Activated CD8-positive, alpha-beta T cell treated with anti-CD3 and anti-CD28 coated beads, Interleukin-2, amount 10 ng/mL, durations not matched to agents 7 days and 5 days (primary cell): ENCODE measurements at regions of chr1 and their contacts with region 1.

Region 1: DNA sequence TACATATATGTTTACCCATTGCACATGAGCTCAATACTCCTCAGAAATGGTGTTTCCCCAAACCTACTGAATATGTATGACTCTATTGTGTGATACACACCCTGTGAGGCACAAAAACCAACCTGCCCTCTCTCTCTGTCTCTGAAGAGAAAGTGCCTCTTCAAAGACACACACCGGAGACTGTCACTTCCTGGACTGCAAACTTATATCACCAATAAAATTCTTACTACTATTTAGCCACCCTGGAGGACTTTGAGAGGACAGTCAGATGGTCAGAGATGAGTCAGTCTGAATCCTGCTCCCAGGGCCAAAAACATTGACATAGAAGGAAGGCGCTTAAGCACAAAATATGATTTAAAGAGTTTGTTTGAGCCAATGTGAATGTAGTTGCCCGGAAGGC is 110.4 kb downstream of the PPIAL4G start:
- DNase-seq: peak; percentile 73
- ATAC-seq: peak; percentile 66
- H3K4me3 Mint-ChIP-seq: peak overlapping the region; percentile 71
- H3K27ac Mint-ChIP-seq: peak overlapping the region; percentile 98
- H3K4me1 Mint-ChIP-seq: peaks cover 59% of the 10 kb centered on the region
- H3K27me3 Mint-ChIP-seq: no peaks in the 10 kb centered on the region

Region 2: DNA sequence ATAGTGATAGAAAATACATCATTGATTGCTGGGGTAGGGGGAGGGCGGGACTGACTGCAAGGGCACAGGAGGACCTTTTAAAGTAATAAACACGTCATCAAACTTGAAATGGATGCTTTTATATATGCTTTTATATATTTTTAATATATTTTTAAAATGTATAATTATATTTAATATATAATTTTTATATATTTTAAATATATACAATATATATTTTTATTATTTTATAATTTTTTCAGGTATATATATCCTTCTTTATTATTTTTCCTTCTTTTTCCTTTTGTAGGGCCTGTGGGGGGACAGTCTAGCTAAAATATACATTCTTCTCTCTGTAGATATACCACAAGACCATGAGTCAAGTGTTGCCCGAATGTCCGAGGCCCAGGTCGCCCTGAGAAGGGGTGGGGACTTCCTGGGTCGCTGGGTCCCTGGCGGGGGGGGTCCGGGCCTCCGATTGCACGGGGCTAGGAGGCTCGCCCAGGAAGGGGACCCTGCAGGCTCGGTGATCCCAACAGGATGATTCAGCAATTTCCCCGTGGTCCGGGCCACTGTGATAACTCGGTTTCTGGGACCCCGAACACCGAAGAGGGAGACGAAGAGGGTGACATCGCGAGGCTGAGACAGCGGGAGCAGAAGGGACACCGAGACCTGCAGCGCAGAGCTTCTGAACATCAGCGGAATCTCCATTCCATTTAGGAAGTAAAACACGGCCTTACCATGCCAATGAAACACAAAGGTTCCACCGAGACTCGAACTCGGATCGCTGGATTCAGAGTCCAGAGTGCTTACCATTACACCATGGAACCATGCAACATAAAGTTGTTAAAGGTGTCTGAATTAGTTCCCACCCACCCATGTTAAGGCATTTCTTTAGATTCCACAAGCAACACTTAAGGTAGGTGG is 108.1 kb before region 1 on chr1:
- CTCF ChIA-PET with region 1: no interaction called
- POLR2A ChIA-PET with region 1: no interaction called
- DNase-seq: no peak
- ATAC-seq: no peak
- H3K4me3 Mint-ChIP-seq: peak overlapping the region; percentile 83
- H3K27ac Mint-ChIP-seq: no peak overlapping the region
- H3K4me1 Mint-ChIP-seq: peaks cover 14% of the 10 kb centered on the region
- H3K27me3 Mint-ChIP-seq: peaks cover 35% of the 10 kb centered on the region

Region 3: DNA sequence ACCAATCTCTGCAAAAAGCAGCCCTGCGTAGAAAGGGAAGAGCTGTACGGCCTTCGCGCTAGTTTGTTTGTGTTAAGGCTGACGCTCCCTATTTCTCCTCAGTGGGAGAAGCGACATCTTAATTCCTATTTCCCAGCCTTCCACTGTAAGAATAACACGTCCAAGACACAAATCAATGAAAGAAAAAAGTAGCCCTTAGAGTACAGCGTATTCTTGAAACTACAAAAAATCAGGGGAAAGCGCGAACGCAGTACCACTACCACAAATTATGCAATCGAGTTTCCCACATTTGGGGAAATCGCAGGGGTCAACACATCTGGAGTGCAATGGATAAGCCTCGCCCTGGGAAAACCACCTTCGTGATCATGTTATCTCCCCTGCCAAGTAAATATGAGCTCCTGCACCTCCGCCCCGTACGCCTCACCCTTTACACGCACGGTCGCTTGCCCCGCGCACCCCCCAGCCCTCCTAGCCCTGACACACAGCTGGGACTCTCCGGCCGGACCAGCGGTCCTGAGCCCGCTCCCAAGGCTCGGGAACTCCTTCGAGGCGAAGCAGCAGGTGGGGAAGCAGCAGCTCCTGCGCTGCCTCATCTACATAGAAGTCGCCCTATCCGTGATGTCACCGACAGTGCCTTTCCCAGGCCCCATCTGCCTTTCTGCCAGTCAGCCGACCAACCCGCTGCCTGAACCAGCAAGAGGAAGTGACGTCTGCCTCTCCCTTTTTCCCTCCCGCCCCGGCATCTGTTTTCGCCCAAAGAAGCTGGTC is 15.7 kb after region 1 on chr1:
- CTCF ChIA-PET with region 1: interaction called, 8 read pairs
- POLR2A ChIA-PET with region 1: interaction called, 68 read pairs
- DNase-seq: peak; percentile 93
- ATAC-seq: peak; percentile 92
- H3K4me3 Mint-ChIP-seq: peak overlapping the region; percentile 93
- H3K27ac Mint-ChIP-seq: peak overlapping the region; percentile 99
- H3K4me1 Mint-ChIP-seq: peaks cover 51% of the 10 kb centered on the region
- H3K27me3 Mint-ChIP-seq: no peaks in the 10 kb centered on the region